ENCODE measurements at regions of chr2 and their contacts with region 1.

Region 1: GRCh38 chr2:28751252-28751955 is at the start of gene PPP1CB:
- ATAC-seq: peak; percentile 81 to 94 (median 92)
- H3K4me3 ChIP-seq: peak within 1 kb of the TSS; percentile 86 to 97 (median 96)
- H3K27ac ChIP-seq: peak within 1 kb of the TSS; percentile 99
- H3K4me1 ChIP-seq: peaks cover 13 to 23% of the 10 kb centered on the region in 2 donors
- total RNA-seq, gene PPP1CB: 96.7 to 217 (median 144) TPM

Region 2: GRCh38 chr2:28583899-28584553 is 167.4 kb before region 1 on chr2:
- in situ Hi-C with region 1: loop called in 8 of 9 experiments (anchors 10 to 25 kb)
- ATAC-seq: peak; percentile 93 to 97 (median 95)
- H3K4me3 ChIP-seq: no peak overlapping the region
- H3K27ac ChIP-seq: peak overlapping the region; percentile 65 to 88
- H3K4me1 ChIP-seq: peaks cover 13 to 18% of the 10 kb centered on the region in 2 donors

Region 3: GRCh38 chr2:29309090-29310029 is 558.0 kb after region 1 on chr2:
- in situ Hi-C with region 1: no loop called
- ATAC-seq: peak; percentile 73 to 97 (median 84)
- H3K4me3 ChIP-seq: no peak overlapping the region
- H3K27ac ChIP-seq: no peak overlapping the region
- H3K4me1 ChIP-seq: peaks cover 5 to 19% of the 10 kb centered on the region in 2 donors

Measured in motor neuron (in vitro differentiated cells).